Prostate gland (tissue), 2 donors: ENCODE measurements at regions of chr20 and their contacts with region 1.

Region 1: DNA sequence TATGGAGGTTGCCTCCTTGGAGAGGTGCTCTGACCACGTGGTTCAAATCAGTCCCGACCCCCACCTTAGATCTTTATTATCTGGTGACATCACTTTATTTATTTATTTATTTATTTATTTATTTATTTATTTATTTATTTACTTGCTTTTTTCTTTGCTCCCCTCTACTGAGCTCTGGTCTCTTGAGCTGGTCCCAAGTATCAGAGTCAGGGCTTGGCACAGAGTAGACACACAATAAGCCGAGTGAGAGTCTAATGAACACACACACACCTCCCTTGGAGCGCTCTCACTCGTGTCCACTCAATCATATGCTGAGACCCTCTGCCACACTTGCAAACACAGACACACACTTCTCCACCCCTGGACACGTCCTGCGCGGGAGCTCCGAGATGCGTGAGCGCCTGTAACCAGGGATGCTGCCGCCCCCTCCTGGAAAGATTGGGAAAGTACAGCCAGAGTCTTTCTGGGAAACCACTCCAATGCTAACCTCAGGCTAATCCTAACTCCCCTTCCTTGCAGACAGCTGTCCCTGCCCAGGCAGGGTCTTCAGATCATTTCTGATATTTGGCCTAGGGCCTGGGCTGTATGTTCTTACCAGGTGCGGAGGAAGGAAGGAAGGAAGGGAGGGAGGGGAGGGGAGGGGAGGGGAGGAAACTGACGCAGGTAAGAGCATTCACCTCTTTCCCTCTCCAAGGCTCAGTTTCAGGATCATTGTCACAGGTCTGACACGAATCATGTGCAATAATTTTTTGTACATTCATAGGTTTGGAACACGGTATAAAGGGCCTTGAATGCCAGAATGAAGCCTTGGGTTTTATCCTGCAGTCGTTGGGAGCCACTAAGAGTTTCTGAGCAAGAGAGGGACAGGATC is 70.9 kb downstream of the STK35 start:
- DNase-seq: peak; percentile 61
- H3K4me3 ChIP-seq: no peak overlapping the region
- H3K27ac ChIP-seq: no peak overlapping the region
- H3K4me1 ChIP-seq: no peaks in the 10 kb centered on the region
- H3K27me3 ChIP-seq: no peaks in the 10 kb centered on the region
- CTCF ChIP-seq: peak; percentile 63 to 86 (median 82)
- POLR2A ChIP-seq: no peak

Region 2: DNA sequence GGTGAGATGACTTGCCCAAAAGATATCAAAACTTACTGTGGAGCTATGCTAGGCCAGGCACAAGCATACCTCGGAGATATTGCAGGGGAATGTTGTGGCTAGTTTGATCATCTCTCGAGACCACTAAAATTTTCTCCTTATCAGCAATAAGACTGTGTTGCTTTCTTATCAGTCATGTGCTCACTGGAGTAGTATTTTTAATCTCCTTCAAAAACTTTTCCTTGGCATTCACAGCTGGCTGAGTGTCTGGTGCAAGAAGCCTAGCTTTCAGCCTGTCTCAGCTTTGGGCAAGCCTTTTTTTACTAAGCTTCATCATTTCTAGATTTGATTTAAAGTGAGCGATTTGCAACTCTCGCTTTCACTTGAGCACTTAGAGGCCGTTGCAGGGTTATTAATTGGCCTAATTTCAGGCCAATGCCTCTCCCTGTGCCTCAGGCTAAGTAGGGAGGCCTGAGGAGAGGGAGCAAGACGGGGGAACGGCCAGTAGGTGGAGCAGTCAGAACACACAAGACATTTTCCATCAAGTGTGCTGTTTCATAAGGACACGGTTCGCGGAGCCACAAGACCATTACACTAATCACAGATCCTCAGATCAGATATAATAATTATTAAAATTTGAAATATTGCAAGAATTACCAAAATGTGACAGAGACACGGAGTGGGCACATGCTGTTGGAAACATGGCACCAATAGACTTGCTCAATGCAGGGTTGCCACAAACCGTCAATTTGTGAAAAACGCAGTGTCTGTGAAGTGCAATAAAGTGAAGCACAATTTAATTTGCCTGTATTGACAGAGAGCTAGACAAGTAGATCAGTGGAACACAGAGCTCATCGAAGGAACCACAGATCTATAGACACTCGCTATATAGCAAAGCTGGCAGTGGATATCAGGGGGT is 408.2 kb before region 1 on chr20:
- intact Hi-C with region 1: loop called (anchors 10 kb)
- DNase-seq: peak; percentile 69
- H3K4me3 ChIP-seq: no peak overlapping the region
- H3K27ac ChIP-seq: no peak overlapping the region
- H3K4me1 ChIP-seq: no peaks in the 10 kb centered on the region
- H3K27me3 ChIP-seq: no peaks in the 10 kb centered on the region
- CTCF ChIP-seq: peak in 3 of 4 experiments; percentile 48 to 75 (median 64)
- POLR2A ChIP-seq: no peak

Region 3: GRCh38 chr20:1965520-1966351 is 206.8 kb before region 1 on chr20:
- intact Hi-C with region 1: loop called (anchors 1 kb)
- DNase-seq: peak; percentile 49
- H3K4me3 ChIP-seq: no peak overlapping the region
- H3K27ac ChIP-seq: no peak overlapping the region
- H3K4me1 ChIP-seq: no peaks in the 10 kb centered on the region
- H3K27me3 ChIP-seq: no peaks in the 10 kb centered on the region
- CTCF ChIP-seq: peak; percentile 89 to 95 (median 94)
- POLR2A ChIP-seq: no peak